Activated CD4-positive, alpha-beta memory T cell treated with anti-CD3 and anti-CD28 coated beads for 36 hours (primary cell): ENCODE measurements at regions of chr16 and their contacts with region 1.

Region 1: DNA sequence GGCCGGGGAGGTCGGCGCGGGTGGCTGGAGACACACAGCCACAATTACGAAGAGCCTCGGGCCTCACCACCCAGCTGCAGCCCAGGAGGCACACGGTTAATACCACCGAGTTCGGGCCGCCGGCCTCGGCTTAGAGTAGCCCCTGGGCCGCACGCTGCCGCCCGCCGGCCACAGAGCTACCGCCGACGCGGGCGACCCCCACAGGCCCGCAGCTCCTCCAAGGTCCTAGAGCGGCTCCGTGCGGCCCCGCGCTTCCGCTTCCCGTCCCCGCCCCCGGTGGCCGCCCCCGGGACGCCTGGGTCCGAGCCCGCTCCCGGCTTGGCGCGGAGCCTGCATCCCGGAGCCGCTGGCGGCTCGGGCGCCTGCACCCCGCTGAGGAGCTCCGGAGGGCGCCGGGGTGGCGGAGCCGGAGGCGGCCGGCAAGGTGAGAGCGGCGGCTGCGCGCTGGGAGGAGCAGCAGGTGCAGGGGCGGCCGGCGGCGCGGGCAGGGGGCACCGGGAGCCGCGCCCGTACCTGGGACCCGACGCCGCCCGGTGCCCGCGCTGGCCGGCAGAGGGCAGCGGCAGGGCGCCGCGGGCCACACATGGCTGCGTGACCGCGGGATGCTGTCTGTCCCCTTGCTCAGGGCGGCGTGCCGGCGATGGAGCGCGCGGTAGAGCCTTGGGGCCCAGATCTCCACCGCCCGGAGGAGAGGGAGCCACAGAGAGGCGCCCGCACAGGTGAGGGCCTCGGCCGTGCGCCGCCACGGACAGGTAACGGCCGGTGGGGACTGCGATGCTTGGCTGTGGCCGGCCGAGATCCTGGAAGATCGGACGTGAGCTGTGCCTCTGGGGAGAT is at the start of gene ZNF48:
- DNase-seq: peak; percentile 64
- H3K4me3 Mint-ChIP-seq: peak within 1 kb of the TSS; percentile 81
- H3K27ac Mint-ChIP-seq: peak within 1 kb of the TSS; percentile 76
- H3K4me1 Mint-ChIP-seq: peaks cover 32% of the 10 kb centered on the region
- H3K27me3 Mint-ChIP-seq: no peaks in the 10 kb centered on the region
- total RNA-seq, gene ZNF48: 13.1 to 13.6 TPM

Region 2: DNA sequence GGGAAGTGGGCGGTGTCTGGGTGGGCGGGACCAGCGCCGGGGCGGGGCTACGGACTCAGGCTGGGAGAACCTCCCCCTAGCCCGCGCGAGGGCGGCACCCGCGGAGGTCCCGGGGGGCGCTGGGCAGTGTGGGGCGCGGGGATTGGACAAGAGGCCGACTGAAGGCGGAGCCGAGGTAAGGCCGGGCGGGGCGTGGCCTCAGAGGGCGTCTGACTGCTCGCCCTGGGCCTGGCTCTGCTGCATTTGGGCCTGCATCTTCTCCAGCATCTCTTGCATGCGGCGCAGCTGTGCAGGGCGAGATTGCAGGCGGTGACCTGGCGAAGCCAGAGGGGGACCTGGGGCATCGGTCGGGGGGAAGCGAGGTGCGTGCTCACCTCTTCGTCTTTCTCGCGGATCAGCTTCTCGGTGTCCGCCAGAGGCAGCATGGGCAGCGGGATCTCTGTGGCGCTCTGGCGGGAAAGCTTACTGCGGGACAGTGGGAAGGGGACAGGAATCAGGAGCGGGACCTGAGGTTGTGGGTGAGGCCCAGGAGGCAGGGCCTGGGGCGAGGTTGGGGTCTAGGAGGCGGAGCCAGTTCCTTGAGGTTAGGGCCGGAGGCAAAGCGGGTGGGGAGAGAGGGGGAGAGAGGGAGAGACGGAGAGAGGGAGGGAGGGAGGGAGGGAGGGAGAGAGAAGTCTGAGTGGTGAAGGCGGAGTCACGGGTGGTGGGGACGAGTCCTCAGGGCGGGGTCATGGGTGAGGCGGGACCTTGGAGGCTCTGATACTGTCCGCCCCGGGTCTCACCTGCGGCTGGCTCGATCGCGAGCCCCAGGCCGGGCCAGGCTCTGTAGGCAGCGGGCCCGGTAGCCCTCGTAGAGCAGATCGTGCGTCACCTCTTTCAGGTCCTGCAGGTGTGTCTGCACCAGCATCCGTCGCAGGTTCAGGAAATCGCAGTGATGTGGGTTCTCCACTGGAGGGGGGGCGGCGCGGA is 16.9 kb before region 1 on chr16:
- CTCF ChIA-PET with region 1: interaction called, 24 read pairs
- POLR2A ChIA-PET with region 1: interaction called, 20 read pairs
- intact Hi-C with region 1: loop called (anchors 1 kb)
- DNase-seq: peak; percentile 100
- H3K4me3 Mint-ChIP-seq: peak overlapping the region; percentile 99
- H3K27ac Mint-ChIP-seq: peak overlapping the region; percentile 96
- H3K4me1 Mint-ChIP-seq: peaks cover 44% of the 10 kb centered on the region
- H3K27me3 Mint-ChIP-seq: no peaks in the 10 kb centered on the region

Region 3: GRCh38 chr16:30472328-30472942 is 77.1 kb after region 1 on chr16 and contains the start of gene ITGAL:
- CTCF ChIA-PET with region 1: no interaction called
- POLR2A ChIA-PET with region 1: no interaction called
- intact Hi-C with region 1: no loop called
- DNase-seq: peak; percentile 93
- H3K4me3 Mint-ChIP-seq: peak within 1 kb of the TSS; percentile 98
- H3K27ac Mint-ChIP-seq: peak within 1 kb of the TSS; percentile 97
- H3K4me1 Mint-ChIP-seq: peaks cover 53% of the 10 kb centered on the region
- H3K27me3 Mint-ChIP-seq: no peaks in the 10 kb centered on the region
- total RNA-seq, gene ITGAL: 218 to 226 TPM

Region 4: GRCh38 chr16:30669896-30670797 is 274.8 kb after region 1 on chr16:
- CTCF ChIA-PET with region 1: no interaction called
- POLR2A ChIA-PET with region 1: no interaction called
- intact Hi-C with region 1: no loop called
- DNase-seq: no peak
- H3K4me3 Mint-ChIP-seq: no peak overlapping the region
- H3K27ac Mint-ChIP-seq: no peak overlapping the region
- H3K4me1 Mint-ChIP-seq: no peaks in the 10 kb centered on the region
- H3K27me3 Mint-ChIP-seq: no peaks in the 10 kb centered on the region